ENCODE measurements at regions of chr19 and their contacts with region 1.

Region 1: GRCh38 chr19:35549174-35549788 is 3.9 kb downstream of the TMEM147 start:
- DNase-seq: no peak
- H3K4me3 ChIP-seq: no peak overlapping the region
- H3K27me3 ChIP-seq: no peaks in the 10 kb centered on the region
- CTCF ChIP-seq: peak; percentile 68

Region 2: DNA sequence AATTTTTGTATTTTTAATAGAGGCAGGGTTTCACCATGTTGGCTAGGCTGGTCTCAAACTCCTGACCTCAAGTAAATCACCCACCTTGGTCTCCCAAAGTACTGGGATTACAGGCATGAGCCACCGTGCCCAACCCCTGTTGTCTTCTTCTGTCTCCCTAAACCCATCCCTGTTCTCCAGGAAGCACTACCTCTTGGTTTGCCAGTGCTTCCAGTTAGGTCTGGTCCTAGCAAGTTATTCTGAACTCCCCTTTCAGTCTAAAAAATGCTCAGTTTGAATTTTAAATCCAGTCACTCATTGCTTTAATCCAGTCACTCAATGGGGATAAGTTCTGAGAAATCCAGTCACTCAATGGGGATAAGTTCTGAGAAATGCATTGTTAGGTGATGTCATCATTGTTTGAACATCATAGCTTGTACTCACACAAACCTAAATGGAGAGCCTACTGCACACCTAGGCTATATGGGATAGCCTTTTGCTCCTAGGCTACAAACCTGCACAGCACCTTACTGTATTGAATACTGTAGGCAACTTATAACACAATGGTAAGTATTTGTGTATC is 22.2 kb after region 1 on chr19:
- CTCF ChIA-PET with region 1: no interaction called
- POLR2A ChIA-PET with region 1: no interaction called
- DNase-seq: no peak
- H3K4me3 ChIP-seq: no peak overlapping the region
- H3K27me3 ChIP-seq: peaks cover 2% of the 10 kb centered on the region
- CTCF ChIP-seq: no peak

Region 3: DNA sequence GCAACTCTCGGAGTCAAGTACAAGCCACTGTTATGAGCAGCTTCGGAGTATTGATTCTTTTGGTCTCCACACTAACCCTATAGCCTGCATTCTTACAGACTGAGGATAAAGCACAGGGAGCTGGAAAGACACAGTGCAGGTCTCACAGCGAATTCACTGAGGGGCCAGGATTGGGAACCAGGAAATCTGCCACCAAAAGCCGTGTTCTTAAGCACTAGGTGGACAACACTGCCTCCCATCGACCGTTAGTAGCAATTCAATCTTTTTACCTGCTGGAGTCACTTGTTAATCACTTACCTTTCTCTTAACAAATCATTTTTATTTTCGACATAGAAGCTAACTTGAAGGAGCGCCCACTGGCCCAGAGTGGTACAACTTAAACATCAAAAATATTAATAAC is 42.9 kb after region 1 on chr19:
- CTCF ChIA-PET with region 1: interaction called, 13 read pairs
- POLR2A ChIA-PET with region 1: no interaction called
- DNase-seq: no peak
- H3K4me3 ChIP-seq: no peak overlapping the region
- H3K27me3 ChIP-seq: no peaks in the 10 kb centered on the region
- CTCF ChIP-seq: peak; percentile 49

Measured in BJ (cell line).